CD4-positive, alpha-beta memory T cell (primary cell): ENCODE measurements at regions of chr12 and their contacts with region 1.

Region 1: DNA sequence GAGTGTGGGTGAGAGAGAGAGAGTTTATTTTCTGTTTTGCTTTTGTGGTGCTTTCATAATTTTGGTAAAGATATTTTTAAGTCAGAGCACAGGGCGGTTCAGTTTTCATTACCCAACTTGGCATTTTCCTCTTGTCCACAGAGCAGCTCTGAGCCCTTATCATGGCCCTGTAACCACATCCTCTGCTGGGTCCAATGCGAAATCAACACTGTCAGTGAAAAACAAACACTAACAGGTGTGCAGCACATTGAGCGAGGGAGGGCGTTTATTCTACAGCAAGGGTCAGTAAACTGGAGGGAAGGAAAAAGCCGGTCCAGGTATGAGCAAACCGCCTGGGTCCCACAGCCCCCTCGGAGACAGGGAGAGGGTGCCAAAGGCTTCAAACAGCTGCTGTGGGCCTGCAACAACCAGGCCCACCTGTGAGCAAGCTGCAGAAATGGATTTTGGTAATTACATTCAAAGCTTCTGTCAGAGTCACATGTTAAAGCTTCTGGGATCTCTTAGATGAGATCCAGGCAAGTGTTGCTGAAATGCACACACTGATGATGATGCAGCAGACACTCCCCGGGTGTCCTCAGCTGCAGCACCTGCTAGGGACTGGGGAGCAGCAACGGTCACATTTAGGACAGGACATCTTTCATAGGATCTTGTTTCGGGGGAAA is 132.7 kb upstream of the DYRK2 start:
- DNase-seq: peak; percentile 64 to 78 (median 70)
- H3K4me3 ChIP-seq: peak overlapping the region in 1 of 2 donors; percentile 4
- H3K4me3 Mint-ChIP-seq: peak overlapping the region; percentile 16 to 79 (median 69)
- H3K27ac ChIP-seq: no peak overlapping the region
- H3K27ac Mint-ChIP-seq: peak overlapping the region; percentile 50 to 91 (median 86)
- H3K4me1 ChIP-seq: peaks cover 64% of the 10 kb centered on the region
- H3K4me1 Mint-ChIP-seq: peaks cover 46 to 73% (median 54%) of the 10 kb centered on the region in 4 donors
- H3K27me3 ChIP-seq: no peaks in the 10 kb centered on the region
- H3K27me3 Mint-ChIP-seq: no peaks in the 10 kb centered on the region

Region 2: GRCh38 chr12:67426067-67426466 is 89.7 kb before region 1 on chr12:
- CTCF ChIA-PET with region 1: no interaction called
- POLR2A ChIA-PET with region 1: no interaction called
- intact Hi-C with region 1: no loop called
- DNase-seq: no peak
- H3K4me3 ChIP-seq: no peak overlapping the region
- H3K4me3 Mint-ChIP-seq: no peak overlapping the region
- H3K27ac ChIP-seq: no peak overlapping the region
- H3K27ac Mint-ChIP-seq: no peak overlapping the region
- H3K4me1 ChIP-seq: peaks cover 6% of the 10 kb centered on the region
- H3K4me1 Mint-ChIP-seq: peaks cover 1 to 10% (median 4%) of the 10 kb centered on the region in 4 donors
- H3K27me3 ChIP-seq: no peaks in the 10 kb centered on the region
- H3K27me3 Mint-ChIP-seq: peaks cover 0 to 2% of the 10 kb centered on the region in 2 donors

Region 3: DNA sequence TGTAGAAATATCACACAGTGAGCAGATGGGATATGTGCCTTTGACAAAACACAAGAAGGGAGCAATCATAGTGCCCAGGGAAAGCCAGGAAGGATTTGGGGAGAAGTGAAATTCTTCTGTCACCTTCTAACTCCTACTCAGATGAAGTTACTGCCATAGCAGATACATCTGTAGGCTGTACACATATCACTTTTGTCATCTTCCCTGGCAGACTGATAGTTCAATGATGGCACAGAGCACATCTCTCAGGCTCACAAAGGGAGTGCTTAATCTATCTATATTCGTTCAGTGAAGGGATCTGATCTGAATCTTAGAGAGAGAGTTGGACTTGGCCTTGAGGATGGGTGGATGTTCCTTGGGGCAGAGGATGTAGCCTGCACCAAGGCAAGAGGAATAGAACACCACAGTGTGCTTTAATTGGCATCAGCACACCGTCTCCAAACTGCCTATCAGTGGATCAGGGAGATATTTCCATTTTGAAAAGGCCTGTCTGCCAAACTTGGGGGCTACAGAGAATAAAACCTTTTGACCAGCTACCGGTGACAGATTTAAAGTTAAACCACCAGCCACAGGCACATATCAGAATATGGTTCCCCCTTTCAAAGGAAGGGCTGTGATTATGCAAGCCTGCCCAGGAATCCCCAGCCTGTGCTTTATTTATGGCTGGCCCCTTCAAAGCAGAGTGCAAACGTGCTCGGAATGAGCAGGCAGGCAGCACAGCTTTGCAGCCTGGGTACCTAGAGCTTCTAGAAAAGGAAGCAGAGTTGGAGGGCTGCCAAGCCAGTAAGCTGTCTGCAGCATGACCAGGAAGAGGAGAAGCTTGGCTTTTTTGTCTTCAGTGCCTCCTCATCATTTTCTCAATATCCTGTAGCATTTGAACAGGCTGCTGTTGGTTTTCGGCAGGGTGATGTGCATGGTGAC is 32.8 kb before region 1 on chr12:
- CTCF ChIA-PET with region 1: interaction called, 11 read pairs
- POLR2A ChIA-PET with region 1: interaction called, 35 read pairs
- intact Hi-C with region 1: loop called (anchors 1 kb)
- DNase-seq: peak; percentile 77 to 86 (median 85)
- H3K4me3 ChIP-seq: no peak overlapping the region
- H3K4me3 Mint-ChIP-seq: peak overlapping the region in 7 of 8 donors; percentile 40 to 83 (median 54)
- H3K27ac ChIP-seq: peak overlapping the region; percentile 36
- H3K27ac Mint-ChIP-seq: peak overlapping the region; percentile 85 to 96 (median 93)
- H3K4me1 ChIP-seq: peaks cover 51% of the 10 kb centered on the region
- H3K4me1 Mint-ChIP-seq: peaks cover 38 to 46% (median 42%) of the 10 kb centered on the region in 4 donors
- H3K27me3 ChIP-seq: no peaks in the 10 kb centered on the region
- H3K27me3 Mint-ChIP-seq: no peaks in the 10 kb centered on the region

Region 4: DNA sequence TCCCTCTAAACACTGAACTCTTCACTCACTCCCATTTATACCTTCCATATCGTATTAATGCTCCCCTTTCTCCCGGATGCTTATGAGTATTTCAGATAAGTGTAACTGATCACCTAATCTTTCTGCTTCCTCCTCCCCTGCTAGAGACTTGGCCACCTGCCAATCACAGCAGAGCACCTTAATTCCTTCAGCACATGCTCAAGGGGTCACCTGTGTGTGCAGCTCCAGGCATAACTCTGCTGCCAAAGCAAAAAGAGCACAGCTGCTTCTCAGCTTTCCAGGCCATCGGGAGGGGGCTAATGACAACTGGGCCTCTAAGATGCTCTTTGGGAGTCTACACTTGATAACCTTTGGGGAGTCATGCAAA is 25.8 kb after region 1 on chr12:
- CTCF ChIA-PET with region 1: interaction called, 3 read pairs
- POLR2A ChIA-PET with region 1: interaction called, 12 read pairs
- intact Hi-C with region 1: no loop called
- DNase-seq: peak in 4 of 5 donors; percentile 27 to 34 (median 30)
- H3K4me3 ChIP-seq: no peak overlapping the region
- H3K4me3 Mint-ChIP-seq: peak overlapping the region in 5 of 8 donors; percentile 0 to 61 (median 47)
- H3K27ac ChIP-seq: no peak overlapping the region
- H3K27ac Mint-ChIP-seq: peak overlapping the region in 5 of 7 donors; percentile 5 to 53 (median 26)
- H3K4me1 ChIP-seq: peaks cover 15% of the 10 kb centered on the region
- H3K4me1 Mint-ChIP-seq: peaks cover 24 to 50% (median 40%) of the 10 kb centered on the region in 4 donors
- H3K27me3 ChIP-seq: no peaks in the 10 kb centered on the region
- H3K27me3 Mint-ChIP-seq: no peaks in the 10 kb centered on the region

Region 5: GRCh38 chr12:67578976-67579661 is 63.3 kb after region 1 on chr12:
- CTCF ChIA-PET with region 1: interaction called, 10 read pairs
- POLR2A ChIA-PET with region 1: interaction called, 37 read pairs
- intact Hi-C with region 1: loop called (anchors 2 kb)
- DNase-seq: peak; percentile 57 to 75 (median 66)
- H3K4me3 ChIP-seq: peak overlapping the region; percentile 2 to 8
- H3K4me3 Mint-ChIP-seq: peak overlapping the region in 7 of 8 donors; percentile 75 to 89 (median 79)
- H3K27ac ChIP-seq: no peak overlapping the region
- H3K27ac Mint-ChIP-seq: peak overlapping the region; percentile 55 to 89 (median 82)
- H3K4me1 ChIP-seq: peaks cover 49% of the 10 kb centered on the region
- H3K4me1 Mint-ChIP-seq: peaks cover 41 to 65% (median 50%) of the 10 kb centered on the region in 4 donors
- H3K27me3 ChIP-seq: no peaks in the 10 kb centered on the region
- H3K27me3 Mint-ChIP-seq: no peaks in the 10 kb centered on the region

Region 6: DNA sequence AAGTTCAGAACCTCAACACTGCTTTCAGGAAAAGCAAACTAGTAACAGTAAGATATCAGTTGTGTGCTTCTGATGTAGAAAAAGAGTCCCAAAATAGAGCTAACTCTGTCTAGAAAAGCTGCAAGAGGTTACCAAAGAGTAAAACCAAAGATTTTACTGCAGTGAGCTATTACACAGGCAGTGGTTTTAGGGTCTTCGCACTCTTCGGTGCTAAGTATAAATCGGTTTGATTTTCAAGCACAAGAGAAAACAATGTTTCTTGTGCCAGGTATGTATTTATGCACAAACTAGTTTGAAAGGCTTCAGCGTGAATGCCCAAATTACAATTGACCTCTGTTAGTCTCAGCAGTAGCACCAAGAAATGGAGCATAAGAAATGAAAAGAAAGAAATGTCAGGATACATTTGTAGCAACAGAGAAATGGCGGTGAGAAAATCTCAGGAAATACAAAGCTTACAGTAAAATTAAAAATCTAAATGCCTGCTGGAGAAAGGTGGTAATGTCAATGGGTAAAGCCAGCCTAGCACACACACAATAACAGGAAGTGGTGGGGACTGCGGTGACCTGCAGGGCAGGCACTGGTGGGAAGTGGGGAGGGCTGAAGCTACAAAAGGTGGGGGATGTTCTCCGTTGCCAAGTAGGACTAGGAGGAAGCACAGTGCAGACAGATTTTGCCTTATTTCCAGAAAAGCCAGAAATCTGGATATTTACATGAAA is 114.7 kb after region 1 on chr12:
- CTCF ChIA-PET with region 1: interaction called, 7 read pairs
- POLR2A ChIA-PET with region 1: interaction called, 38 read pairs
- intact Hi-C with region 1: loop called (anchors 1 kb)
- DNase-seq: peak; percentile 91 to 96 (median 92)
- H3K4me3 ChIP-seq: no peak overlapping the region
- H3K4me3 Mint-ChIP-seq: peak overlapping the region; percentile 61 to 88 (median 74)
- H3K27ac ChIP-seq: peak overlapping the region; percentile 43
- H3K27ac Mint-ChIP-seq: peak overlapping the region; percentile 87 to 96 (median 91)
- H3K4me1 ChIP-seq: peaks cover 84% of the 10 kb centered on the region
- H3K4me1 Mint-ChIP-seq: peaks cover 67 to 91% (median 82%) of the 10 kb centered on the region in 4 donors
- H3K27me3 ChIP-seq: no peaks in the 10 kb centered on the region
- H3K27me3 Mint-ChIP-seq: no peaks in the 10 kb centered on the region